Colonic mucosa (tissue), 4 donors: ENCODE measurements at regions of chr2 and their contacts with region 1.

Region 1: DNA sequence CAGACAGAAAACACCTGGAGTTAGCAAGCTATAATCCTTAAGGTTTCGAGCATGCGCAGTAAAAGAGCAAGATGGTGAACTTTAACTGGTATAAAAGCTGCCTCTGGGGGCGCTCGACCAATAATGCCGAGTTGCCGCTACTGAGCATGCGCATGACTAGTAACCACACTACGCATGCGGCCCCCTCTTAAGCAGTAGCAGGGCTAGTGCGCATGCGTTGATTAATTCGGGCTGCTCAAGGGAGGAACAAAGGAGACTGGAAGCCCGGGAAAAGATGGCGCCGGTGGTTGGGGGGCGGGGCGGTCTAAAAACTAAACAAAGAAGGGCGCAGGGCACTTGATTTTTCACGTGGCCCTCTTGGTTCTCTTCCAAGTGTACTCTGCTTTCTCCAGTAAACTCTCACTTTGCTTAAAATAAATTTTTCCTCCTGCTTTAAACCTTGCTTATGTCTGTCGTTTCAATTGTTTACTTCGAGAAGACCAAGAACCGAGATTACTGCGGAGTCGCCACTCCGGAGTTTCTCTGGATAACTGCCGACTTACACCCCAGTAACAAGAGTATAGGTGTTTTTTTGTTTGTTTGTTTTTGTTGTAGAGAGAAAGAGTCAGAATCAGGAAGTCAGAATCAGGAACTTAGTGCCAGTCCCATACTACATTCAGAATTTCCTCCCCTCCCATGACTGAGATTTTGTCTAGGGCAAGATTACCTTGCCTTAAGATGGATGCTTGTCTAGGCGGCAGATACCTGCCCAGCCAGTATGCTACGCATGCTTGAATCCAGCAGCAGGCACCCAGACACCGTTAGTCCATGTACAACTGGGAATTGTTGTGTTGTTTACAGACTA is 5.8 kb downstream of the XRCC5 start:
- DNase-seq: peak; percentile 99
- H3K4me3 ChIP-seq: peak overlapping the region; percentile 37
- H3K27ac ChIP-seq: peak overlapping the region; percentile 75
- H3K4me1 ChIP-seq: no peaks in the 10 kb centered on the region
- H3K27me3 ChIP-seq: no peaks in the 10 kb centered on the region
- CTCF ChIP-seq: peak; percentile 76

Region 2: GRCh38 chr2:216034065-216034464 is 80.9 kb before region 1 on chr2:
- intact Hi-C with region 1: loop called (anchors 5 kb)
- DNase-seq: peak; percentile 77
- H3K4me3 ChIP-seq: no peak overlapping the region
- H3K27ac ChIP-seq: no peak overlapping the region
- H3K4me1 ChIP-seq: no peaks in the 10 kb centered on the region
- H3K27me3 ChIP-seq: no peaks in the 10 kb centered on the region
- CTCF ChIP-seq: peak; percentile 81